Heart right ventricle (tissue), 16 donors: ENCODE measurements at regions of chr22 and their contacts with region 1.

Region 1: DNA sequence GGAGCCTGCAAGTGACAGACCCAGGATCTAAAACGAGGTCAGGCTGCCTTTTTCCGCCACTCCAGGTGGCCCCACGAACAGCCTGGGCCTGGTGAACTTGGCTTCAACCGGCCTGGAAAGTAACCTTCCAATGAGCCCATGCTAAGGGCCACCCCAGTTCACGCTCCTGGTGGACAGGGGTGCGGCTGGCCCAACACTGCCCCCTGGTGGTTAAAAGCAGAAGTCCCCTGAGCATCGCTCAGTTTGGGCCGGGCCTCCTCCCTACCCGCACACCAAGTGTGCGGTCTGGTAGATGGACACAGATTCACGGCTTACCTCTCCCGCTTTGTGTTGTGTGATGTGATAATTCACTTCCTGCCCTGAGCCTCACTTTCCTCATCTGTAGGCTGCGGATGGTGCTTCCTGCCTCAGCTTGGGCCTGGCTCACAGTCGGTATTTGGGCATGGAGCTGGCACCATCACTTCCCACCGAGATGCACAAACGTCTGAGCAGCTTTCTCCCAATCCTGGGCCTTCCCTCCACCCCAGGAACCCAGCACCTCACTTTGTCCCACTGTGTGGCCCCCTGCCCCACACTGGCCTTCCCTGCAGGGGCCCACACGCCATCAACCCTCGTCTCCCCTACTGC is 13.7 kb upstream of the SEC14L3 start:
- DNase-seq: peak; percentile 44 to 53
- ATAC-seq: peak; percentile 86 to 92 (median 88)
- H3K4me3 ChIP-seq: no peak overlapping the region
- H3K27ac ChIP-seq: no peak overlapping the region
- H3K4me1 ChIP-seq: peaks cover 0 to 3% (median 0%) of the 10 kb centered on the region in 9 donors
- H3K27me3 ChIP-seq: peaks cover 0 to 13% (median 4%) of the 10 kb centered on the region in 7 donors
- CTCF ChIP-seq: peak; percentile 85 to 99 (median 96)

Region 2: GRCh38 chr22:30262917-30263741 is 222.3 kb before region 1 on chr22:
- intact Hi-C with region 1: loop called in 2 of 10 experiments (anchors 10 kb)
- DNase-seq: peak; percentile 71 to 76
- ATAC-seq: peak in 6 of 8 donors; percentile 8 to 59 (median 52)
- H3K4me3 ChIP-seq: peak overlapping the region in 5 of 10 donors; percentile 19 to 32 (median 25)
- H3K27ac ChIP-seq: peak overlapping the region in 1 of 10 donors; percentile 71
- H3K4me1 ChIP-seq: peaks cover 0 to 56% (median 4%) of the 10 kb centered on the region in 9 donors
- H3K27me3 ChIP-seq: peaks cover 0 to 25% (median 11%) of the 10 kb centered on the region in 7 donors
- CTCF ChIP-seq: peak; percentile 91 to 99 (median 97)

Region 3: DNA sequence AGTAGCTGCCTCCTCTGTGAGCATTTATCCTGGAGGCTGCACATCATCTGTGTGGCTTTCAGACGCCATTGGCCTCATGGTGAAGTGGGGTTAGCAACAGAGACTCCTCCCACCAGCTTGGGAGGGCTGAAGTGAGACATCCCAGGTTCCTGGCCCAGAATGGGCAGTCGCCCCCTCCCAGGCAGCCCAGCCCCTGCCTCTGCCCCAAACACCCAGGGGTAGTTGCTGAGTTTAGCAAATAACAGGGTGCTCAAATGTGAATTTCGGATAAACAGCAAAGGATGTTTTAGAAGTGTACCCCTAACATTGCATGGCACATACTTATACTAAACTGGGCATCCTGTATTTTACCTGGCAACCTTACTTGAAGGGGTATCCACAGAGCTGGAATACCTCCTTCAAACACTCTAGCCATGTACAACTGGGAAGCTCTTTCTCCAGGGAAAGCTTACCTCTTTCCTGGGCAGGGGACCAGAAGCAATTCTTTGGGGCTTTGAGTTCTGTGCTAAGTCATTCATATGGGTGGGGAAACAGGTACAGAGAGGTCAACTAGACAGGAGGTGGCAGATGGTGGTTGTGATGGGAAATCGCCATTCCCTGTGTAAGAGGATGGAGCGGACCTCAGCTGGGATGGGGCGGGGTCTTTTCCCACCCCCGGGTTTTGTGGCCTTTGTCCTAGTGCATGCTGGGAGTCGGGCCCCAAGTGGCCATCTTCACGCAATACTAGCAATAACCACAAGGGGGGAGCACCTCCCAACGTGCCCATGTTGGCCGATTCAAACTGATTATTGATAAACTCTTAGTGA is 40.6 kb before region 1 on chr22:
- intact Hi-C with region 1: loop called in 2 of 10 experiments (anchors 5 kb)
- DNase-seq: no peak
- ATAC-seq: peak in 2 of 8 donors; percentile 53 to 55
- H3K4me3 ChIP-seq: no peak overlapping the region
- H3K27ac ChIP-seq: no peak overlapping the region
- H3K4me1 ChIP-seq: peaks cover 0 to 10% (median 0%) of the 10 kb centered on the region in 9 donors
- H3K27me3 ChIP-seq: peaks cover 0 to 65% (median 17%) of the 10 kb centered on the region in 7 donors
- CTCF ChIP-seq: peak in 8 of 9 donors; percentile 38 to 79 (median 67)